ENCODE measurements at regions of chr2 and their contacts with region 1.

Region 1: DNA sequence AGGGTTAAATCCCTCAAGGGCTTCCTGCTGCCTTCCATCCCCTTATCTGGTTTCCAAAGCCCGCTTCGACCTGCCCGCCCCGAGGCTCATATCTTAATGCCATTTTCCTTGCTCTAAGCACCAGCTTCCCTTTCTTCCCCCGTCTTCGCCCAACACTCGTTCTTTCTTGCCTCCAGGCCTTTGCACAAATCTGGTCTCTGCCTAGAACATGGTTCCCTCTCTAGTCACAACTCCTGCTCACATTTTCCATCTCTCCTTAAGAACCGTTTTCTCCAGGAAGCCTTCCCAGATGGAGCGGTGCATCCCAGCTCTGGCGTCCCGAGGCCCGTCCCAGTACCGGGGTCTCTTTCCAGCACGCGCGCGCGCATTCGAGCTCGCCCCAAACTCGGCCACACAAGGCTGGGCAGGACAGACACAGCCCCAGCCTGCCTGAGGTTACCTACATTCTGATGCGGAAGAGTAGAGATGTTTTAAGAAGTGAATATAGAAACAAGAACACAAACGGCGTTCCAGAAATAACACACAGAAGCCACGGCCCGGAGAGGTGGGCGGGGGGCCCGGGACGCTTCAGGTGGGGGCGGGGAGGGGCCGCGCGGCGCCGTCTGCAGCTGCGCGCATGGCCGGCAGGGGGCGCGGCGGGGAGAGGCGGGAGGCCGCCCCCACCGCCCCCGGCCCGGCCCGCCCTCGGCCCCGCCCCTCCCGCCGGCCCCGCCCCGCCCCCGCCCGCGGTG is at the start of gene DGKD:
- DNase-seq: peak; percentile 9
- H3K4me3 ChIP-seq: peak within 1 kb of the TSS; percentile 66 to 70 (median 69)
- H3K27ac ChIP-seq: peak within 1 kb of the TSS; percentile 36
- H3K4me1 ChIP-seq: peaks cover 29% of the 10 kb centered on the region
- H3K27me3 ChIP-seq: no peaks in the 10 kb centered on the region
- CTCF ChIP-seq: no peak
- total RNA-seq, gene DGKD: 9.2 to 17.1 TPM

Region 2: GRCh38 chr2:233289648-233290047 is 64.3 kb before region 1 on chr2:
- CTCF ChIA-PET with region 1: no interaction called
- dilution Hi-C with region 1: loop called (anchors 5 kb)
- in situ Hi-C with region 1: no loop called
- intact Hi-C with region 1: no loop called
- DNase-seq: no peak
- H3K4me3 ChIP-seq: no peak overlapping the region
- H3K27ac ChIP-seq: no peak overlapping the region
- H3K4me1 ChIP-seq: no peaks in the 10 kb centered on the region
- H3K27me3 ChIP-seq: no peaks in the 10 kb centered on the region
- CTCF ChIP-seq: no peak

Region 3: DNA sequence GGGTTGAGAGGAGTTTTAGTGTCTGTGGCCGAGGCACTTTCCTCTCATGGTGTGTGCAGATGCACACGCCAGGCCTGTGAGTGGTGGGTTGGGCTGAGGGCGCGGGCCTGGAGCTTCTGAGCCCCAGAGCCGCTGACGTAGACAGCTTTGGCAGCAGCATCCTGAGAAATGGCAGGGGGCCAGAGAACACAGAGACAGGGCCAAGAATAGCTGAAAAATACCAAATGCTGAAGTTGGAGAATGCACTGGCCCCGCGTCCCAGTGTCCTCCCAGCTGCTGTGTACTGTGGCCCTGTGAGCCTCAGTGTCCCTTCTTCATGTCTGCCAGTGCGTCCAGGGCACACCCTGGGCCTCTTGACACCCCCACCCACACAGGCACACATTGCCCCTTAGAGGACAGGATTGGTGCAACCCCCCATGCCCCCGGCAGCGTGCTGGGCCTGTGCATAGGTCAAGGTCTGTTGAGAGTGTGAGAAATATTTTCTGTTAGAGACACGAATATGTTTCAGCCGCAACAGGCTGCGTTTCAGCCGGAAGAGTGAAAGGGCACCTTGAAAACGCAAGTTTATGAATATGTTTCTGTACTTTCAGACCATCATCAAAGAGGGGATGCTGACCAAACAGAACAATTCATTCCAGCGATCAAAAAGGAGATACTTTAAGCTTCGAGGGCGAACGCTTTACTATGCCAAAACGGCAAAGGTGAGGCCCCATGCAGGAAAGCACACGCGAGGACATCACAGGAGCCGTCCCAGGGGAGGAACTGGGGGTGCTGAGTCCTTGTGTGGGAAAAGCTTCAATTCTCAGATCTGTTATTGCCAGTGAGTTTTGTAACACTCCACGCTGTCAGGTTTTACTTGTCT is 34.0 kb after region 1 on chr2:
- CTCF ChIA-PET with region 1: no interaction called
- dilution Hi-C with region 1: loop called (anchors 5 kb)
- in situ Hi-C with region 1: no loop called
- intact Hi-C with region 1: no loop called
- DNase-seq: no peak
- H3K4me3 ChIP-seq: no peak overlapping the region
- H3K27ac ChIP-seq: no peak overlapping the region
- H3K4me1 ChIP-seq: peaks cover 13% of the 10 kb centered on the region
- H3K27me3 ChIP-seq: no peaks in the 10 kb centered on the region
- CTCF ChIP-seq: no peak

Region 4: GRCh38 chr2:233443468-233444183 is 89.7 kb after region 1 on chr2:
- CTCF ChIA-PET with region 1: no interaction called
- dilution Hi-C with region 1: loop called (anchors 5 kb)
- in situ Hi-C with region 1: no loop called
- intact Hi-C with region 1: loop called (anchors 1 kb)
- DNase-seq: peak; percentile 56
- H3K4me3 ChIP-seq: no peak overlapping the region
- H3K27ac ChIP-seq: no peak overlapping the region
- H3K4me1 ChIP-seq: no peaks in the 10 kb centered on the region
- H3K27me3 ChIP-seq: no peaks in the 10 kb centered on the region
- CTCF ChIP-seq: peak; percentile 84 to 89

Region 5: DNA sequence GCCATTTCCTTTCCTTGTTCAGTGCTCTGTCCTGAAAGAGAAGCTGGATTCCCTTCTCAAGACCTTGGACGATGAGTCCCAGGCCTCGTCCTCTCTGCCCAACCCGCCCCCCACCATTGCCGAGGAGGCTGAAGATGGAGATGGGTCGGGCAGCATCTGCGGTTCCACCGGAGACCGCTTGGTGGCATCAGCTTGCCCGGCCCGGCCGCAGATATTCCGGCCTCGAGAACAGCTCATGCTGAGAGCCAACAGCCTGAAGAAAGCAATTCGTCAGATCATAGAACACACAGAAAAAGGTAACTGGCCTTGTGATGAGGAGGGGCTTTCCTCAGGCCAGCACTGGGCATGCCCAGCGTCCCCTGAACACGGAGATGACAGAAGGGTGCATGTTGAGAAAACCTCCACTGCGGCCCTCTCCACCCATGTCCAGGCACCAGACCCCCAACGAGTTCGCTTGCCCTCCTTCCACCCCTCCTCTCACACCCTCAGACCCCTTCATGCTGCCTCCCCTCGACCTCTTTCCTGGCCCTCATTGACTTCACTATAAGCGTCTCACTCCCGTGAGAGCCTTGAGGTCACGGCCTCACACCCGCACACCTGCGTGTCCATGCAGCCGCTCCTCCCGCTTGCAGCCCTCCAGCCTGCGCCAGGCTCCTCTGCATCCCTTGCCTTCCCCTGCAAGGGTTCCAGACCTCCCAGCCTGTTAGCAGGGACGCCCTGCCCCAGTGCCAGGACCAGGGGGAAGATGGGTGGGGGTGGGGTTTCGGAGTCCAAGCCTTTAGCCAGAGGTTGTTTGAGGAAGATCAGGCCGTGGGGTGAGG is 95.4 kb after region 1 on chr2:
- CTCF ChIA-PET with region 1: no interaction called
- dilution Hi-C with region 1: loop called (anchors 5 kb)
- in situ Hi-C with region 1: no loop called
- intact Hi-C with region 1: no loop called
- DNase-seq: no peak
- H3K4me3 ChIP-seq: no peak overlapping the region
- H3K27ac ChIP-seq: no peak overlapping the region
- H3K4me1 ChIP-seq: no peaks in the 10 kb centered on the region
- H3K27me3 ChIP-seq: no peaks in the 10 kb centered on the region
- CTCF ChIP-seq: peak; percentile 48 to 72

Region 6: GRCh38 chr2:233711312-233712008 is 357.5 kb after region 1 on chr2:
- CTCF ChIA-PET with region 1: no interaction called
- dilution Hi-C with region 1: no loop called
- in situ Hi-C with region 1: no loop called
- intact Hi-C with region 1: no loop called
- DNase-seq: peak; percentile 60
- H3K4me3 ChIP-seq: no peak overlapping the region
- H3K27ac ChIP-seq: no peak overlapping the region
- H3K4me1 ChIP-seq: peaks cover 4% of the 10 kb centered on the region
- H3K27me3 ChIP-seq: no peaks in the 10 kb centered on the region
- CTCF ChIP-seq: peak; percentile 88 to 92

Region 7: DNA sequence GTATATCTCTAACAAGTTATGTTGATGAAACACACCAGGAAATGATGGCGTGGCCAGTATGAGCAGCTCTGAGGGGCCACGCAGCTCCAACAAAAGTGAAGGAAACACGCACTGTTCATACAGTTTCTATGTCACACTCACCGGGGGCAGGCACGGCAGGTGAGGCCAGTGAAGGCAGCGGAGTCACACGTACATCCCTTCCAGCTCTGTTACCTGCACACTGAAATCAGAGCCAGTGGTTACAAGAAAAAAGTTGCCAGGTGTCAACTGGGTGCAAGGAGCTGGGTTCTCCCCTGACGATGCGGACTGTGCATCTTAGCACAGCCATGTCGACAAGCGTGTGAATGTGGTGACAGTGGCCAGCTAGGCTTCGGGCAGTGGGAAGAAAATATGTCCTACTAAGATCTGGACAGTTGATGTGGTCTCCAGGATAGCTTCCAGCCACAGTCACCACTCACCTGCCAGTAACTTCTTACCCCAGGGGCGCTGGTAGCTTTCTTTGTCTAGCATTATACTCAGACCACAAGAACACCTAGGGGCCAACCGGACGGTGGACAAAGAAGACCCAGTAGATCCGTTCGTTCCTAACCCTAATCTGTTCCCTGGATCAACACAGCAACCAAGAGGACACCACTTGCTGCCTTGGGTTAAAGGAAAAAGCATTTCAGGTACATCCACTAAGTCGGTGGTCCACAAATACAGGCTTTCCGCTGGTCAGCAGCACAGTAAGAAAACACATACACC is 490.3 kb after region 1 on chr2:
- CTCF ChIA-PET with region 1: interaction called, 15 read pairs
- dilution Hi-C with region 1: no loop called
- in situ Hi-C with region 1: no loop called
- intact Hi-C with region 1: no loop called
- DNase-seq: no peak
- H3K4me3 ChIP-seq: no peak overlapping the region
- H3K27ac ChIP-seq: no peak overlapping the region
- H3K4me1 ChIP-seq: no peaks in the 10 kb centered on the region
- H3K27me3 ChIP-seq: no peaks in the 10 kb centered on the region
- CTCF ChIP-seq: no peak